HepG2 (cell line): ENCODE measurements at regions of chr11 and their contacts with region 1.

Region 1: GRCh38 chr11:36564376-36565030 is 3.3 kb upstream of the RAG1 start:
- DNase-seq: peak; percentile 54
- ATAC-seq: peak; percentile 91
- H3K4me3 ChIP-seq: peak overlapping the region in 2 of 3 experiments; percentile 38 to 47; a peak in 4 of 6 replicates
- H3K27ac ChIP-seq: no peak overlapping the region
- H3K4me1 ChIP-seq: no peaks in the 10 kb centered on the region
- H3K27me3 ChIP-seq: peaks cover 0 to 9% of the 10 kb centered on the region in 2 experiments; a peak in 3 of 5 replicates
- CTCF ChIP-seq: peak; percentile 66
- EP300 ChIP-seq: no peak
- POLR2A ChIP-seq: no peak
- RAD21 ChIP-seq: peak; percentile 58; the same call in 1 of the 2 replicates

Region 2: DNA sequence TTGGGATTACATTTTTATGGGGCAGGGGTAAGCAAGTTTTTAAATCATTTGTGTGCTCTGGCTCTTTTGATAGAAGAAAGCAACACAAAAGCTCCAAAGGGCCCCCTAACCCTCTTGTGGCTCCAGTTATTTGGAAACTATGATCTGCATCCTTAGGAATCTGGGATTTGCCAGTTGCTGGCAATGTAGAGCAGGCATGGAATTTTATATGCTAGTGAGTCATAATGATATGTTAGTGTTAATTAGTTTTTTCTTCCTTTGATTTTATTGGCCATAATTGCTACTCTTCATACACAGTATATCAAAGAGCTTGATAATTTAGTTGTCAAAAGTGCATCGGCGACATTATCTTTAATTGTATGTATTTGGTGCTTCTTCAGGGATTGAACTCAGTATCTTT is 13.4 kb after region 1 on chr11:
- CTCF ChIA-PET with region 1: no interaction called
- POLR2A ChIA-PET with region 1: no interaction called
- in situ Hi-C with region 1: no loop called
- intact Hi-C with region 1: no loop called
- DNase-seq: no peak
- ATAC-seq: no peak
- H3K4me3 ChIP-seq: no peak overlapping the region
- H3K27ac ChIP-seq: no peak overlapping the region
- H3K4me1 ChIP-seq: no peaks in the 10 kb centered on the region
- H3K27me3 ChIP-seq: peaks cover 0 to 8% of the 10 kb centered on the region in 2 experiments; a peak in 3 of 5 replicates
- CTCF ChIP-seq: no peak
- EP300 ChIP-seq: no peak
- POLR2A ChIP-seq: no peak
- RAD21 ChIP-seq: no peak

Region 3: GRCh38 chr11:36622431-36623136 is 58.1 kb after region 1 on chr11:
- CTCF ChIA-PET with region 1: interaction called, 18 read pairs
- POLR2A ChIA-PET with region 1: no interaction called
- in situ Hi-C with region 1: loop called (anchors 5 kb)
- intact Hi-C with region 1: loop called (anchors 1 kb)
- DNase-seq: peak; percentile 31
- ATAC-seq: peak; percentile 93
- H3K4me3 ChIP-seq: no peak overlapping the region
- H3K27ac ChIP-seq: no peak overlapping the region
- H3K4me1 ChIP-seq: no peaks in the 10 kb centered on the region
- H3K27me3 ChIP-seq: no peaks in the 10 kb centered on the region
- CTCF ChIP-seq: peak; percentile 55
- EP300 ChIP-seq: no peak
- POLR2A ChIP-seq: no peak
- RAD21 ChIP-seq: peak; percentile 27; the same call in 1 of the 2 replicates

Region 4: GRCh38 chr11:36672813-36673450 is 108.4 kb after region 1 on chr11:
- CTCF ChIA-PET with region 1: interaction called, 26 read pairs
- POLR2A ChIA-PET with region 1: no interaction called
- in situ Hi-C with region 1: no loop called
- intact Hi-C with region 1: loop called (anchors 1 kb)
- DNase-seq: peak; percentile 55
- ATAC-seq: peak; percentile 53
- H3K4me3 ChIP-seq: no peak overlapping the region
- H3K27ac ChIP-seq: no peak overlapping the region
- H3K4me1 ChIP-seq: no peaks in the 10 kb centered on the region
- H3K27me3 ChIP-seq: no peaks in the 10 kb centered on the region
- CTCF ChIP-seq: peak; percentile 66
- EP300 ChIP-seq: no peak
- POLR2A ChIP-seq: no peak
- RAD21 ChIP-seq: no peak

Region 5: DNA sequence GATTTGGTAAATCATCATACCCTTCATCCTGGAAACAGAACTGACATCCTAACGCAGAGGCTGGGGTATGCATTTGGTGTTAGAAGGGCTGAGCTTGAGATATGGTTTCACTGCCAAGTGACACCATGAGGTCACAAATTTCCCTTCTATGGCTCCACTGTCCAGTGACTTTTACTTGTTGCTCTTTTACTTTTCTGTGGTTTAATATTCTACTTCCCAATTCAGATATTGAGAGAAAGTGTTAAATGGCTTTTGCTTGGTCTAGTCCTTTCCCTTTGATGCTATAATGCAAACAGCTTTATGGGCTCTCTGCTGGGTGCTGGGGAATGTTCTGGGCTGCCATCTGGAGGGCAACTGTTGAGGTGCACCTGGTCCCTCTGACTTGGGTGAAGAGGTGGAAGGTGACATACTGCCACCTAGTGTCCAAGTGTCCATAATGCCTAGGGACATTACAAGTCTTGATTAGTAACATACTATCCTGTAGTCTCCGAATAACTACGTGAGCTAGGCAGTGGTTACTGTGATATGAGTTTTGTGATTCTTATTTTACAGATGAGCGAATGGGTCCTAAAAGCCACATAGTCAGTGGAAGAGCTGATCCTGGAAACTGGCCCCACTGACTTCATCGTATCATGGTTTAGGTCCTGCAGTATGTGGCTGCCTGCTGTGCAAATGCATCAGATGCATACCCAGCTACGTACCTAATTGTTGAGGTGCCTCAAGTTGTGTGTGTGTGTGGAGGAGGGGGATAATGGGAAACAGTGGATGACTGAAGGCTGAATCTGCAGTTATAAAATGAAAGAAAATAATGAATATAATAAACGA is 182.6 kb after region 1 on chr11:
- CTCF ChIA-PET with region 1: interaction called, 43 read pairs
- POLR2A ChIA-PET with region 1: no interaction called
- in situ Hi-C with region 1: loop called (anchors 5 kb)
- intact Hi-C with region 1: loop called (anchors 1 kb)
- DNase-seq: peak; percentile 87
- ATAC-seq: peak; percentile 98
- H3K4me3 ChIP-seq: no peak overlapping the region
- H3K27ac ChIP-seq: no peak overlapping the region
- H3K4me1 ChIP-seq: no peaks in the 10 kb centered on the region
- H3K27me3 ChIP-seq: no peaks in the 10 kb centered on the region; a peak in 2 of 5 replicates
- CTCF ChIP-seq: peak; percentile 96
- EP300 ChIP-seq: no peak
- POLR2A ChIP-seq: no peak
- RAD21 ChIP-seq: peak; percentile 75